ENCODE measurements at regions of chr1 and their contacts with region 1.

Region 1: GRCh38 chr1:166384948-166385347 is 218.1 kb upstream of the FAM78B start:
- DNase-seq: no peak

Region 2: GRCh38 chr1:166307261-166308188 is 77.4 kb before region 1 on chr1:
- intact Hi-C with region 1: loop called (anchors 2 kb)
- DNase-seq: no peak

Region 3: DNA sequence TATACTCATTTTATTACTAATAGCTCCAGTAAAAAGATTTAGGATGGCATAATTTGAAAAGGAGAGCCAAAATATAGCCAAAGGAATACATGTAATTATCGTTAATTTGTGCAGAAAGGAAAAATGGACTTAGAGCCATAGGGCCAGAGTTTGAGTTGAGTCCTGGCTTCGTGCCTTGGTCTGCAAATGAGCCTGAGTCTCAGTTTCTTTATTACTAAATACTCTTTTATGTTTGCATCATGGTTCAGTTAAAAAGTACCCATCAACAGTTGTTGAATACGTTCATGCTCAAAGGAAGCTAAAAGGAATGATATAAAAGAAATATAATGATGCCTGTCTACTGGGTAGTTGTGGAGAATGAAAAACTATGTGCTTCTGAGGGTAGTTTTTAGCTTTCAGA is 62.5 kb before region 1 on chr1:
- intact Hi-C with region 1: no loop called
- DNase-seq: no peak

Region 4: GRCh38 chr1:166338105-166338504 is 46.8 kb before region 1 on chr1:
- intact Hi-C with region 1: no loop called
- DNase-seq: no peak

Region 5: DNA sequence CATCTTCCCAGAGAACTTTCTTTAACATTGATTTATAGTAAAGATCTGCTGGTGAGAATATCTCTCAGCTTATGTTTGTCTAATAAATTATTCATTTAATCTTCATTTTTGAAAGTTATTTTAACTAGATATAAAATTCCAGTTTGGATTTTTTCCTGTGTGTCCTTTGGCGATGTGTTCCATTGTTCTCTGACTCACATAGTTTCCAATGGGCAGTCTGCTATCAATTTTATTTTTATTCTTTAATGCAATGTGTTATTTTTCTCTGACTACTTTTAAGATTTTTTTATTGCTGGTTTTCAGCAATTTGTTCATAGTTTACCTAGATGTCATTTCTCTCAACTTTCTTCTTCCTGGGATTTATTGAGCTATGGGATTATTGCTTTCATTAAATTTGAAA is 129.1 kb after region 1 on chr1:
- intact Hi-C with region 1: no loop called
- DNase-seq: no peak